ENCODE measurements at regions of chr9 and their contacts with region 1.

Region 1: GRCh38 chr9:35406183-35406956 is 83.5 kb upstream of the RUSC2 start:
- DNase-seq: peak; percentile 23 to 64
- ATAC-seq: peak in 3 of 4 donors; percentile 49 to 68 (median 60)
- H3K4me3 ChIP-seq: no peak overlapping the region
- H3K27ac ChIP-seq: no peak overlapping the region
- H3K4me1 ChIP-seq: no peaks in the 10 kb centered on the region
- H3K27me3 ChIP-seq: no peaks in the 10 kb centered on the region
- CTCF ChIP-seq: no peak

Region 2: GRCh38 chr9:34376596-34377403 is 1029.6 kb before region 1 on chr9 and contains the start of gene MYORG:
- intact Hi-C with region 1: no loop called
- DNase-seq: peak; percentile 94 to 98
- ATAC-seq: peak; percentile 82 to 88 (median 86)
- H3K4me3 ChIP-seq: peak within 1 kb of the TSS; percentile 71
- H3K27ac ChIP-seq: peak within 1 kb of the TSS; percentile 78
- H3K4me1 ChIP-seq: peaks cover 29% of the 10 kb centered on the region
- H3K27me3 ChIP-seq: no peaks in the 10 kb centered on the region
- CTCF ChIP-seq: no peak
- total RNA-seq, gene MYORG: 16.3 to 34.1 (median 25.1) TPM

Region 3: DNA sequence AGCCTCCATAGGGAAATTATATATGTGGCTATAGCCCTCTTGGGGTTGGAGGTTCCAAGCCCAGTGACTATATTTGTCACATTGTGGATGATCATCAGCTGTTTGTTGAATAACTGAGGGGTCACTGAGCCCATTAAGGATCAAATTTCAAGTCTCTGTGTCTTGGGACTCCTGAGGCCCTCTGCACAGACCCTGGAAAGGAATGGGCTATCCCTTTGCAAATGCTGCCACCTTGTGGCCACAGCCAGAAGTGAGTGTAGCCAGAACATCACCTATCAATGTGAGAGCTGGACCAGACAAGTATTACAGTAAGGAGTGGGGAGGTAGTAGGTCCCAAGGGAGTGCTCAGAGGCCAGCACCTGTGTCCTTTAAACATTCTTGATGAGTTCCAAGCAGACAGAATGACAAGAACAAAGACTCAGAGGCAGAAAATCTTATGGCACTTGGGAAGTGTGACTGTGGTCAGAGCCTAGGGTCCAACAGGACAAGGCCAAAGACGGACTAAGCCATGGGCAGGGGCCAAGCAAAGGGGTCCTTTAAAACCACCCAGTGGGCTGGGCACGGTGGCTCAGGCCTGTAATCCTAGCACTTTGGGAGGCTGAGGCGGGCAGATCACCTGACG is 802.6 kb before region 1 on chr9:
- intact Hi-C with region 1: no loop called
- DNase-seq: peak; percentile 82 to 92
- ATAC-seq: peak; percentile 91 to 96 (median 94)
- H3K4me3 ChIP-seq: no peak overlapping the region
- H3K27ac ChIP-seq: no peak overlapping the region
- H3K4me1 ChIP-seq: peaks cover 6% of the 10 kb centered on the region
- H3K27me3 ChIP-seq: no peaks in the 10 kb centered on the region
- CTCF ChIP-seq: peak; percentile 92

Region 4: DNA sequence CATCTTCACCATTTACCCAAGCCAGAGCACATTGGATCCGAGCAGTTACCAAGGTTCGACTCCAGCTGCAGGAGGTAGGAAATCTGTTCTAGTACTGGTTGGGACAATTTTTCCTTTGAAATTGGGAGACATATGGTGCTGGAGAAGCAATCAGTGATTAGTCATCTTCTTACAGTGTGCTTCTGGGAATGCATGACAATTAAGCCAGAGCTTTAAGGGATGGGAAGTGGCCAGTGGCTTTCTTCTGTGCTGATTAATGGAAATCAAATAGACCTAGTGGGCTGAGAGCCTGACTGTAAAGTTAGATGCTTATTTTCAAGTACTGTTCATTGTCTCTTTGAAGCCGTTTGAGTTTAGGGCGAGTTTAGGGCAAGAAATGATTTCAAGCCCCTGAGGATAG is 92.5 kb before region 1 on chr9:
- intact Hi-C with region 1: no loop called
- DNase-seq: no peak
- ATAC-seq: peak in 2 of 4 donors; percentile 26 to 42
- H3K4me3 ChIP-seq: no peak overlapping the region
- H3K27ac ChIP-seq: no peak overlapping the region
- H3K4me1 ChIP-seq: peaks cover 25% of the 10 kb centered on the region
- H3K27me3 ChIP-seq: no peaks in the 10 kb centered on the region
- CTCF ChIP-seq: no peak

Region 5: DNA sequence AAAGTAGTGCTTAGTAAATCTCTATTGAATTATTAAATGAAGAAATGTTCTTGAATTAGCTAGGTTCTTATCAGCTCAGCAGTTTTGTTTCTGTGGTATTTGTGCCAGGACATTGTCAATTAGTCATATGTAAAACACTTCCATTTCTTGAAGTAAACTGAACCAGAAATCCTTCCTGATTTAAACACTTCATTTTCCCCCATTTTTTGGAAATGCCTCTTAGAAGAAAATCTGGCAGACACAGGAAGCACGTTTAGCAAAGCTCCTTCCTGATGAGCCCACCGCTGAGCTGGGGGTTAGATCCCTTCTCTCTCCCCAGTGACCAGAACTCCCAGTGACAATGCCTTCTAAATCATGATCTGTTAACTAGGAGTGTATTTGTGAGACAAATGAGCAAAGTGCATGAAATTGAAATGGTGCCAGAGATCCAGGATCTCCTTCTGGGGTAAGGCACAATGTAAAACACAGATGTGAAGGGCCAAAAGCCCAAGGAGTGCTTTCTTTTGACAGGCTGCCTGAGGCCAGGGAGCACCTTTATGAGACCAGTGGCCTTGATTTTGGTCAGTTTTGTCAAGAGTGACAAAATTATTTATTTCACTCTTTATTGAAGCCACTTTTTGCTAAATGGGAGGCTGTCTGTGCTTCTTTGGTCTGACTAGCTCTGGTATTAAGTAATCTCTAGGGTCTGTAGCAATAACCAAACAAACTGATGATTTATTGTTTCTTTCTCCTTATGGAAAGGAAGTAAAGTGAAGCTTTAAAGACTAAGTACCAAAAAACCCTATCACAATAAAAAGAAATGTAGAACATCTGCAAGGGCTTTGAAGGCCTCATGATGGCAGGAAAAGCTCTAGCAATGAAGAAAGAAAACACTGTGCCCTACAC is 58.0 kb after region 1 on chr9:
- intact Hi-C with region 1: loop called in 1 of 2 experiments (anchors 10 kb)
- DNase-seq: no peak
- ATAC-seq: no peak
- H3K4me3 ChIP-seq: no peak overlapping the region
- H3K27ac ChIP-seq: no peak overlapping the region
- H3K4me1 ChIP-seq: no peaks in the 10 kb centered on the region
- H3K27me3 ChIP-seq: peaks cover 0 to 3% (median 0%) of the 10 kb centered on the region in 3 donors
- CTCF ChIP-seq: no peak

Region 6: GRCh38 chr9:35508069-35508468 is 101.7 kb after region 1 on chr9:
- intact Hi-C with region 1: no loop called
- DNase-seq: no peak
- ATAC-seq: no peak
- H3K4me3 ChIP-seq: no peak overlapping the region
- H3K27ac ChIP-seq: peak overlapping the region; percentile 92
- H3K4me1 ChIP-seq: peaks cover 51% of the 10 kb centered on the region
- H3K27me3 ChIP-seq: no peaks in the 10 kb centered on the region
- CTCF ChIP-seq: no peak

Region 7: GRCh38 chr9:35579130-35579529 is 172.8 kb after region 1 on chr9:
- intact Hi-C with region 1: loop called in 1 of 2 experiments (anchors 10 kb)
- DNase-seq: no peak
- ATAC-seq: peak in 1 of 4 donors; percentile 39
- H3K4me3 ChIP-seq: no peak overlapping the region
- H3K27ac ChIP-seq: no peak overlapping the region
- H3K4me1 ChIP-seq: no peaks in the 10 kb centered on the region
- H3K27me3 ChIP-seq: no peaks in the 10 kb centered on the region
- CTCF ChIP-seq: no peak

Region 8: GRCh38 chr9:35705836-35706430 is 299.6 kb after region 1 on chr9:
- intact Hi-C with region 1: loop called in 1 of 2 experiments (anchors 10 kb)
- DNase-seq: no peak
- ATAC-seq: peak in 2 of 4 donors; percentile 12 to 23
- H3K4me3 ChIP-seq: no peak overlapping the region
- H3K27ac ChIP-seq: no peak overlapping the region
- H3K4me1 ChIP-seq: no peaks in the 10 kb centered on the region
- H3K27me3 ChIP-seq: no peaks in the 10 kb centered on the region
- CTCF ChIP-seq: no peak

Measured in psoas muscle (tissue), 8 donors.